ENCODE measurements at regions of chr19 and their contacts with region 1.

Region 1: GRCh38 chr19:33176670-33177416 is 17.3 kb upstream of the LRP3 start:
- DNase-seq: peak; percentile 97
- ATAC-seq: peak; percentile 86
- H3K4me3 Mint-ChIP-seq: peak overlapping the region; percentile 93
- H3K27ac Mint-ChIP-seq: peak overlapping the region; percentile 98
- H3K4me1 Mint-ChIP-seq: peaks cover 34% of the 10 kb centered on the region
- H3K27me3 Mint-ChIP-seq: peaks cover 2% of the 10 kb centered on the region
- CTCF ChIP-seq: no peak

Region 2: GRCh38 chr19:32405431-32406161 is 771.2 kb before region 1 on chr19 and contains the start of gene DPY19L3:
- CTCF ChIA-PET with region 1: no interaction called
- POLR2A ChIA-PET with region 1: interaction called, 4 read pairs
- intact Hi-C with region 1: loop called (anchors 2 kb)
- DNase-seq: peak; percentile 93
- ATAC-seq: peak; percentile 91
- H3K4me3 Mint-ChIP-seq: peak within 1 kb of the TSS; percentile 91
- H3K27ac Mint-ChIP-seq: peak within 1 kb of the TSS; percentile 93
- H3K4me1 Mint-ChIP-seq: peaks cover 16% of the 10 kb centered on the region
- H3K27me3 Mint-ChIP-seq: no peaks in the 10 kb centered on the region
- CTCF ChIP-seq: no peak
- total RNA-seq, gene DPY19L3: 22.1 and 29.8 TPM in 2 replicates

Region 3: GRCh38 chr19:32674959-32675719 is 501.7 kb before region 1 on chr19 and contains the start of gene ANKRD27:
- CTCF ChIA-PET with region 1: no interaction called
- POLR2A ChIA-PET with region 1: no interaction called
- intact Hi-C with region 1: loop called (anchors 2 kb)
- DNase-seq: peak; percentile 99
- ATAC-seq: peak; percentile 96
- H3K4me3 Mint-ChIP-seq: peak within 1 kb of the TSS; percentile 91
- H3K27ac Mint-ChIP-seq: peak within 1 kb of the TSS; percentile 84
- H3K4me1 Mint-ChIP-seq: peaks cover 27% of the 10 kb centered on the region
- H3K27me3 Mint-ChIP-seq: peaks cover 10% of the 10 kb centered on the region
- CTCF ChIP-seq: no peak
- total RNA-seq, gene ANKRD27: 33.1 and 44.7 TPM in 2 replicates

Region 4: GRCh38 chr19:33143897-33144405 is 32.9 kb before region 1 on chr19:
- CTCF ChIA-PET with region 1: interaction called, 5 read pairs
- POLR2A ChIA-PET with region 1: interaction called, 4 read pairs
- intact Hi-C with region 1: loop called (anchors 1 kb)
- DNase-seq: peak; percentile 38
- ATAC-seq: peak; percentile 98
- H3K4me3 Mint-ChIP-seq: peak overlapping the region; percentile 44
- H3K27ac Mint-ChIP-seq: no peak overlapping the region
- H3K4me1 Mint-ChIP-seq: peaks cover 5% of the 10 kb centered on the region
- H3K27me3 Mint-ChIP-seq: peaks cover 17% of the 10 kb centered on the region
- CTCF ChIP-seq: no peak

Region 5: DNA sequence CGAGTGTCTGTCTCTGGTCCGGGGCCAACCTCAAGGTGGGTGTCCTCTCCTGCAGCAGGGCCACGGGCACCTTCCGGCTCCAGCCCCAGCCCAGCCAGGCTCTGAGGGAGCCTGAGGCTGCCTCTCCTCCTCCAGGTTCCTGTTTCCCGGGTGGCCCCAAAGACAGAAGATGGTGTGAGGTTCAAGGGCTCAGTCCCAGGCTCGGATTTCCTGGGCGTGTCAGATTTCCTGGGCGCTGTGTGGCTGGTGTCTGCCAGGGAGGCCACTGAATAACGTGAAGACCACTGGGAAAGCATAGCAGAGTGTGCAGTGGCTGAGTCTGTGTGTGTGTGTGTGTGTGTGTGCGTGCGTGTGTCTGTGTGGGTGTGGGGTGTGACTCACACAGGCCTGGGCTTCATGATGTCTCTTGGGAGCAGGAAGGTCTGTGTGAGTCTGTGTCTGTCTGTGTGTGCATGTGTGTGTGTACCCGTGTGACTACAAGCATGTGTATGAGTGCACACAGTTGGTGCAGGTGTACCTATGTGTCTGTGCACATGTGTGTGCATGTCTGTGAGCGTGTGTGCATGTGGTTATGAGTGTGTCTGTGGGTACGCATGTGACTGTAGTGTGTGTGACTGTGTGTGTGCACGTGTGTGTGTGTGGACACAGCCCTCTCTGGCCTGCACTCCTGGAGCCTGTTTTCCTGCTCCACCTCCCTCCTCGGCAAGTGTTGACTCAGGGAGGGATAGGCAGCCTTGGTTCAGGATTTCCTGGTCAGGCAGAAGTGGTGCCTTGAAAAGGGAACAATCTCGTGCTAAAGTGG is 97.2 kb after region 1 on chr19:
- CTCF ChIA-PET with region 1: no interaction called
- POLR2A ChIA-PET with region 1: no interaction called
- intact Hi-C with region 1: no loop called
- DNase-seq: no peak
- ATAC-seq: no peak
- H3K4me3 Mint-ChIP-seq: no peak overlapping the region
- H3K27ac Mint-ChIP-seq: no peak overlapping the region
- H3K4me1 Mint-ChIP-seq: no peaks in the 10 kb centered on the region
- H3K27me3 Mint-ChIP-seq: peaks cover 7% of the 10 kb centered on the region
- CTCF ChIP-seq: no peak

Region 6: GRCh38 chr19:33302175-33302973 is 125.5 kb after region 1 on chr19 and contains the start of gene CEBPA:
- CTCF ChIA-PET with region 1: no interaction called
- POLR2A ChIA-PET with region 1: interaction called, 13 read pairs
- intact Hi-C with region 1: loop called (anchors 1 kb)
- DNase-seq: peak; percentile 70
- ATAC-seq: peak; percentile 93
- H3K4me3 Mint-ChIP-seq: peak within 1 kb of the TSS; percentile 77
- H3K27ac Mint-ChIP-seq: no peak within 1 kb of the TSS
- H3K4me1 Mint-ChIP-seq: peaks cover 7% of the 10 kb centered on the region
- H3K27me3 Mint-ChIP-seq: peaks cover 32% of the 10 kb centered on the region
- CTCF ChIP-seq: no peak
- total RNA-seq, gene CEBPA: 0.51 and 0.83 TPM in 2 replicates

Region 7: DNA sequence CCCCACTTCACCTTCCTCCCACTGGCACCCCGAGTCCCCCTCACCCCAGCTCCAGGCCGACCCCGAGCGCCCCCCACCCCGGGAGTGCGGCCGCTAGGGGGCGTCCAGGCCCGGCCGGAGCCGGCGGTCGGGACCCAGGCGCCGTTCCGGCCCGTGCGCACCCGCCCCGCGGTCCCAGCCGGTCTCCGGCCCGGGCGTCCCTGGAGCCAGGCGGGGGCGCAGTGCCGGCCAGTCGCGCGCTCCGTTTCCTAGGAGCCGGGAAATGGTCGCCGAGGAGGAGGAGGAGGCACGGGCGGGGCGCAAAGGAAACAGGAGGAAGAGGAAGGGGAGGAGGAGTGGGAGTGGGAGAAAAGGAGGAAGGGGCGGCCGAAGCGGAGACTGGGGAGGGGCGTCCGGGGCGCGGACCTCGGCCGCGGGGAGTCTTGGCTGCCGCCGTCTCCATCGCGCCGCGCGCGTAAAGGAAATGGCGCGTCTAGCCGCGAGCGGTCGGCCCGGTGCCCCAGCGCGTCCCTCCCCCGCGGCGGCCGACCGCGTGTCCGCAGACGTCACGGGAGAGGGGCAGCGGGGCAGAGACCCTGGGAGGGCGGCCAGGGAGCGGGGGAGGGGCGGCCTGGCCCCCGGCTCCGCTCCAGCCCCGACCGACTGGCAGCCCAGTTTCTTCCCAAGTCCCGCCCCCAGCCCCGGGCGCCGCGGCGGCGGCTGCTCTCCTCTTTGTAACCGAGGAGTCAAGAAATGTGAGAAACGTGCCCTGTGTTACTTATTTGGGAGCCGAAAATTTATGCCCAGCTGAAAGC is 618.7 kb after region 1 on chr19:
- CTCF ChIA-PET with region 1: no interaction called
- POLR2A ChIA-PET with region 1: no interaction called
- intact Hi-C with region 1: loop called (anchors 2 kb)
- DNase-seq: peak; percentile 64
- ATAC-seq: peak; percentile 64
- H3K4me3 Mint-ChIP-seq: peak overlapping the region; percentile 75
- H3K27ac Mint-ChIP-seq: peak overlapping the region; percentile 46
- H3K4me1 Mint-ChIP-seq: peaks cover 5% of the 10 kb centered on the region
- H3K27me3 Mint-ChIP-seq: peaks cover 19% of the 10 kb centered on the region
- CTCF ChIP-seq: no peak

Region 8: DNA sequence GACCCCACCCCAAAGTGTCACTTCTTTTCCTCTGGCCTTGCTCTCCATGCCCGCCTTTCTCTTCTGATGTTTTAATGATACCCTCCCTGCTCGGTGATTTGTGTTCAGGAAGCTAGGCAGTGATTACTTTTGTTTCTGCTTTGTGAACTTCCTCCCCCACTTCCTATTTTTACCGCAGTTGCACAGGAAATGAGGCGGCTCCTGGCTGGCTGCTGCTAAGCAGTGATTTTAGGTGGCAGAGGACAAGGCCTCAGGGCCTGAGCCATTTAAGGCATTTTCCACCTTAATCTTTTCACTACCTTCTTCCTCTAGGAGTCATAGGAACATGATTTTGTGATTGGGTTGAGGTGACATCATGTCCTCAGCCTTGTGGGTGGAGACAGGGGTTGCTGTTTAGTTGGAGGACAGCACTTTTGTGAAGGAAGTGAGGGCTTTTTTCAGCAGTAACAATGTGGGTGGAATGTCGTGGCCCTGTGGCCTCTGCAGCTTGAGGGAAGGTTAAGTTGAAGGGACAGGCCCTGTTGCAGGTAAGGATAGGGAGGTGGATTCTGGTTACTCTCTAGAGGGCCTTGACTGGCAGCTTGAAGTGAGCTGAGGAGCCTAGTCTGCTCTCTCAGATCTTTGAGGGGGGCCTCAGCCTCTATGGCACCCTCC is 1093.3 kb after region 1 on chr19:
- CTCF ChIA-PET with region 1: no interaction called
- POLR2A ChIA-PET with region 1: no interaction called
- intact Hi-C with region 1: loop called (anchors 10 kb)
- DNase-seq: peak; percentile 47
- ATAC-seq: peak; percentile 87
- H3K4me3 Mint-ChIP-seq: peak overlapping the region; percentile 77
- H3K27ac Mint-ChIP-seq: peak overlapping the region; percentile 95
- H3K4me1 Mint-ChIP-seq: peaks cover 85% of the 10 kb centered on the region
- H3K27me3 Mint-ChIP-seq: no peaks in the 10 kb centered on the region
- CTCF ChIP-seq: no peak